ENCODE measurements at regions of chr13 and their contacts with region 1.

Region 1: GRCh38 chr13:37788346-37788745 is 81.2 kb downstream of the TRPC4 start:
- DNase-seq: no peak
- ATAC-seq: no peak

Region 2: DNA sequence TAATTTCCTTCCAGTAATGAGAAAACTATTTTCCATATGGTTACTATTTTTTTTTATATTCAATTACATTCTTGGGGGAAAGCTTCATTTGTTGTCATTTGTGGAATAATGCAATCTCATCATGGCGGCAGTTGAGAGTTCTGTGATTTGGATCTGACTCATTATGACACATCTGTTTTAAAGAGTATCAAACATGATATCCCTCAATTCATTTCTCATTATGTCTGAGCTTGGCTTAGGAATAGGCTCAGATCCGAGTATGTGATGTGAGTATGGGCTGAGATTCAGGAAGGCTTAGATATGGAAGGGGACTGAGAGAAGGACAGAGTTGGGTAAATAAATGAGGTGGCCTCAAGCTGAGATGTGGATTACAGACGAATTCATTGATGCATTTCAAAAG is 254.2 kb before region 1 on chr13:
- intact Hi-C with region 1: no loop called
- DNase-seq: no peak
- ATAC-seq: no peak

Region 3: GRCh38 chr13:38103851-38104250 is 315.5 kb after region 1 on chr13:
- intact Hi-C with region 1: no loop called
- DNase-seq: no peak
- ATAC-seq: no peak

Region 4: DNA sequence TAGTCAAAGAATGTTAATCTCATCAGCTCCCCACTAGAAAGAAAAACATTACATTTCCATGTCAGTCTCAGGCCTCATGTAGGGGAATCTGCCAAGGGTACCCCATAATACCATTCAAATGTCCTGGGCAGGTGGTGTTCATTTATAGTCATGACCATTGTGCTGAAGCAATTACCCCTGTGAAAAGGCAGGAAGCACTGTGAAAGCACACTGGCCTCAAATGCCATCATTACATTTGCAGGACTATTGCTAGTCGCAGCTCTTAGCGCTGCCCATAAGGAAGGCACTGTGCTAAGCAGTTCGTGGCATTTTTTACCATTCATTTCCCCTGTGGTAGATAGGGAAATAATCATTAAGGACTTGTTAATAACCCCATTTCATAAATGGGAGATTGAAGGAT is 1705.7 kb after region 1 on chr13:
- intact Hi-C with region 1: loop called (anchors 10 kb)
- DNase-seq: no peak
- ATAC-seq: no peak

Measured in sciatic nerve (tissue), 2 donors.